Breast epithelium (tissue), 4 donors: ENCODE measurements at regions of chr6 and their contacts with region 1.

Region 1: GRCh38 chr6:32952817-32953739 is at the start of gene HLA-DMA:
- DNase-seq: peak; percentile 86 to 92
- H3K4me3 ChIP-seq: peak within 1 kb of the TSS; percentile 16 to 35 (median 34)
- H3K27ac ChIP-seq: peak within 1 kb of the TSS; percentile 71 to 73
- H3K4me1 ChIP-seq: no peaks in the 10 kb centered on the region
- H3K27me3 ChIP-seq: no peaks in the 10 kb centered on the region
- CTCF ChIP-seq: peak; percentile 65 to 83 (median 79)
- POLR2A ChIP-seq: no peak
- total RNA-seq, gene HLA-DMA: 28.5 to 41.9 (median 30.9) TPM

Region 2: DNA sequence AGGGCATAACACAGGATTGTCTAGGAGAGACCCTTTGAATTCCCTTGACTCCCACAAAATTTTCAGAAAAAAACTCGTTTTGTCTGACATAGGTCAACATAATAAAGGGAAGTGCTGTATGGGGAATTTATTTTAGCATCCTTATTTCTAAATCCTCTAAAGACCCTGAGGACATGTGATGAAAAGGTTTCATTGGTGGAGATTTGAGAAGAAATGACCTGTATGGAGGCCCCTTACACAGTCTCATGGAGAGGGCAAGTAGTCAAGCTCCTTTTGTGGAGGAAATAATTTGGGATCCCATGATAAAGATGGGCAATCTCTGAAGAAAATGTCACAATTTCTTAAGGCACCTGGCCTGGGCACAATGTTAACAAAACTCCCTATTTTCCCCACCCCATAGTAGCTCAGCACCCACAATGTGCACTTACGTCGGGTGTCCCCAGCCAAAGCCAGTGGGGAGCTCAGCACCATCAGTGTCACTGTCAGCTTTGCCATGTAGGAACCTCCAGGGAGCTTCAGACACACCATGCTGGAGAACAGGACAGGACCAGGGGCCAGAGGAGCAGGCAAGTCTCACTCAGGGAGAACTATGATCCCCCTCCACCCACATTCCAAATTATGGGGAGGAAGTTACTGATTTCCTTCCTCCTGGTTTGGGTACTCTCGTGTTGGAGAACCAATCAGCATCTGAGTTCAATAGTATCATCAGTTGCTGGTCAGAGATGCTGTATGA is 423.2 kb before region 1 on chr6 and contains the start of gene HLA-DRB5:
- intact Hi-C with region 1: no loop called
- DNase-seq: peak in 1 of 2 donors; percentile 37
- H3K4me3 ChIP-seq: peak within 1 kb of the TSS in 1 of 3 donors; percentile 22
- H3K27ac ChIP-seq: no peak within 1 kb of the TSS
- H3K4me1 ChIP-seq: no peaks in the 10 kb centered on the region
- H3K27me3 ChIP-seq: no peaks in the 10 kb centered on the region
- CTCF ChIP-seq: no peak
- POLR2A ChIP-seq: no peak
- total RNA-seq, gene HLA-DRB5: 0.32 to 66.2 (median 8.8) TPM

Region 3: GRCh38 chr6:32885698-32886286 is 67.3 kb before region 1 on chr6:
- intact Hi-C with region 1: loop called (anchors 10 kb)
- DNase-seq: no peak
- H3K4me3 ChIP-seq: no peak overlapping the region
- H3K27ac ChIP-seq: no peak overlapping the region
- H3K4me1 ChIP-seq: no peaks in the 10 kb centered on the region
- H3K27me3 ChIP-seq: no peaks in the 10 kb centered on the region
- CTCF ChIP-seq: peak; percentile 45 to 73 (median 68)
- POLR2A ChIP-seq: no peak

Region 4: DNA sequence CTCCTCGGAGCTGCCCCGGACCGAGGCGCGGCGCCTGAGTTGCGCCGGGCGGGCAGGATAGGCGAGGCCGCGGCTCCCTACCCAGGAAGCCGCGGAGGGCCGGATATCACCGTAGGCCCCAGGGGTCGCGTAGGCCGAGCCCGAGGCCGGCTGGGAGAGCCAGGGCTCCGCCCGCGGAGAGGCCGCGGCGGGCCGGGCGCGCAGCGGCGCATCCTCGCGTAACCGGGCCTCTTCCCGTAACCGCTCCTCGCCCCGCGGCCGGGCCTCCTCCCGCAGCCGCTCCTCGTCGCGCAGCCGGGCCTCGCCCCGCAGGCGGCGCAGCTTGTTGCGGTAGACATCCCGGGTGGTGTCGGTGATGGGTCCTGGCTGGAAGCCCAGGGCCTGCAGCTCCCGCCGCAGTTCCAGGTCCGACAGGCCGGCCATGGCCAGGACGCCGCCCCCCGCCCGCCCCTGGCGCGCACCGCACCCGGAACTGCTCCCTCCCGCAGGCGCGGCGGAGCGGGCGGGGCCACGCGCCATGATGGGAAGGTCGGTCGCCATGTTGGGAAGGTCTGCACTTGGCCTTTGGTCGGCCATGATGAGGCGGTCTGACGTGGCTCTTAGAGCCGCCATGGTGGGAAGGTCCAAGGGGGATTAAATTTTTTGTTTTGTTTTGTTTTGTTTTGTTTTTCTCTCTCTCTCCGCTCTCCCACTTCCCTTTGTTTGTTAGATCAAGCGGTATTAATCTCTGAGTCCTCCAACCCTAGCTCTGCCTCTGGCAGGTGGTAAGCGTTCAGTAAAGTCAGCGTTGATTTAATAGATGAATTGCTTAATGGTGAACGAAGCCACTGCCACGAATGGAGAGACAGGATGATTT is 835.8 kb after region 1 on chr6 and contains the start of gene LEMD2:
- intact Hi-C with region 1: loop called (anchors 5 kb)
- DNase-seq: peak; percentile 90 to 91
- H3K4me3 ChIP-seq: peak within 1 kb of the TSS; percentile 94 to 97 (median 95)
- H3K27ac ChIP-seq: peak within 1 kb of the TSS; percentile 96 to 97
- H3K4me1 ChIP-seq: peaks cover 0 to 21% of the 10 kb centered on the region in 2 donors
- H3K27me3 ChIP-seq: no peaks in the 10 kb centered on the region
- CTCF ChIP-seq: no peak
- POLR2A ChIP-seq: peak; percentile 76
- total RNA-seq, gene LEMD2: 42.2 to 69.1 (median 59.0) TPM

Region 5: DNA sequence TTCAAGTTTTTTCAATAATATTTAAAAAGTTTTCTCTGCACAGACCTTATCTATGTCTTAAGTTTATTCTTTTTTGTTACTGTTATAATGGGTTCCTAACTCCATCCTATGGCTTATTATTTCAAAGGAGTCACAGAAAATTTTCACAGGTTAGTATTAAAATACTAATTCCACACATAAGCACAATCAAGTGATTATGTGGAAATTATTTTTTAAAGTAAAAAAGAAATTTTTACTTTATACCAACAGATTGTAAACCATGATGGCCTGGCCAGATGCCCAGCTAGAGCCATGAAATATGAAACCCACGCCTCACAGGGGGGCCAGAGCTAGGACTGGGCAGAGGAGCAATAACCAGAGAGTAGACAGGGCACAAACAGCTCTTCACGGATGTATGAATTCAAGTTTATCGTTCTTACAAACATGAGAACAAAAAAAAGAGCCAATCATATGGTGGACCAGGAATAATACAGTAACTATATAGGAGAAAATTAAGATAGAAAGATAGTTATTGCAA is 1405.4 kb after region 1 on chr6:
- intact Hi-C with region 1: no loop called
- DNase-seq: no peak
- H3K4me3 ChIP-seq: no peak overlapping the region
- H3K27ac ChIP-seq: no peak overlapping the region
- H3K4me1 ChIP-seq: peaks cover 0 to 10% of the 10 kb centered on the region in 2 donors
- H3K27me3 ChIP-seq: no peaks in the 10 kb centered on the region
- CTCF ChIP-seq: no peak
- POLR2A ChIP-seq: no peak